ENCODE measurements at regions of chr6 and their contacts with region 1.

Region 1: DNA sequence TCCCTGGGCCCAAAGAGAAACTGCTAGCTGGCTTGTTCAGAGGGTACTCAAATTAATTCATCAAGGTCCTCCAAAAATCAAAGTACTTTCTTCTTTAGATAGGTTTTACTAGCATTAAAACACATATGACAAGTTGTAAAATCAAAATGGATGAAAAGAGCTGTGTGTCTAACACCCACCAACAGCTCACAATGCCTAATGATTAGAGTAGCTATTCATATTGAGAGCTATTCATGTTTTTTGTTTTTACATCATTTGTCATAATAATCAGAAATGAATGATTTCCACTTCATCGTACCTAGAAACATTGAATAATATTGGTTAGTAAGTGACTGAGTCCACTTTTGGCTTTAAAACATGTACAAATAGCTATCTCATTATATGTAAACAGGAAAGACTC is 289.9 kb upstream of the RUNX2 start:
- DNase-seq: no peak
- ATAC-seq: no peak
- H3K4me3 ChIP-seq: no peak overlapping the region
- H3K27ac ChIP-seq: no peak overlapping the region
- H3K4me1 ChIP-seq: no peaks in the 10 kb centered on the region
- H3K27me3 ChIP-seq: no peaks in the 10 kb centered on the region
- CTCF ChIP-seq: no peak

Region 2: GRCh38 chr6:44925100-44925739 is 113.0 kb before region 1 on chr6:
- CTCF ChIA-PET with region 1: interaction called, 10 read pairs
- POLR2A ChIA-PET with region 1: no interaction called
- intact Hi-C with region 1: no loop called
- DNase-seq: no peak
- ATAC-seq: no peak
- H3K4me3 ChIP-seq: no peak overlapping the region
- H3K27ac ChIP-seq: no peak overlapping the region; the same call in 1 of the 2 replicates
- H3K4me1 ChIP-seq: peaks cover 5% of the 10 kb centered on the region
- H3K27me3 ChIP-seq: no peaks in the 10 kb centered on the region
- CTCF ChIP-seq: no peak

Measured in PC-3 (cell line).